Panc1 (cell line): ENCODE measurements at regions of chr11 and their contacts with region 1.

Region 1: GRCh38 chr11:10735481-10736475 is 15.3 kb upstream of the CTR9 start:
- DNase-seq: peak; percentile 97
- ATAC-seq: peak; percentile 99
- H3K4me3 ChIP-seq: peak overlapping the region; percentile 24 to 52
- H3K27ac ChIP-seq: peak overlapping the region; percentile 74
- H3K4me1 ChIP-seq: peaks cover 11% of the 10 kb centered on the region
- H3K27me3 ChIP-seq: no peaks in the 10 kb centered on the region
- CTCF ChIP-seq: peak; percentile 100

Region 2: DNA sequence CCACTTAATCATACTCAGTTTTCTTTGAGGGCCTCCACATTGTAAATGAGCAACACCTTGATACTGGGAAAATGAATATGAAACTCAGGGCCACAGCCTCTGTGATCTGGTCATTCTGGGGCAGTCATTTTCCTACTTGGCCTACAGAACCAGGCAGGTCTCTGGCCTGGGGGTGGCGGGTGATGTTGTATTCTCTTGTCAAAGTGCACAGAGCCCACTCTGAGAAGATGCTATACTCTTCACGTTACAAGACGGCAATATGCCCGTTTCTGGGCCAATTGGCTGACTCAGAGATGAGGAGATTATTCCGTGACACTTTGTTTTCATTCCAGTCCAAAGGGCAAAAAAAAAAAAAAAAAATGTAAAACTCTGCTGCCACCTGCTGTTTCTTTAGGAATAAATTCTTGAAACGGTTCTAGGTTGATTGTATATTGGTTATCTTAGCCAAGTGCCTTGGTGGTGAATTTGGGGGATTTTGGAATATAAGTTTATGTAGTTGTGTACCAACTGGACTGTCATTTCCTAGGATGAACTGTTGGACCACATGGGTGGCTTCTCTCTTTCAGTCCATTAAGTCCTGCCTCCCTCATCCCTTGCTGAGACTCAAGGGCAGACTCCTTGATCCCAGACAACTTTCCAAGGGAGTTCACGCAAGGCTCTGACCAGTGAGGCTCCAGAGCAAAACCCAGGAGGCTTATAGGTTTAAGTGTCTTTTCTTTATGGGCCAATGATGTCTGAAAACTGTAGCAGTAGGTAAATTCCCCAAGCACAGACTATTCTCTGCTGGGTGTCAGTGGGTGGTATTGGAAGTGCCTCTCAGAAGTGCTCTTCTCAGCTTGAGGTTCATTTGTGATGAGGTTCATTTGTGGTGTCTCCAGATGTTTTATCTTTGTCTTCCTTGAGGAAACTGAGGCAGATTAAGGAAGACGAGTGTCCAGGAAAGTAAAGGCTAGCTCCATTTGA is 412.7 kb before region 1 on chr11:
- CTCF ChIA-PET with region 1: no interaction called
- POLR2A ChIA-PET with region 1: no interaction called
- in situ Hi-C with region 1: no loop called
- intact Hi-C with region 1: loop called (anchors 5 kb)
- DNase-seq: peak; percentile 90
- ATAC-seq: peak; percentile 82
- H3K4me3 ChIP-seq: peak overlapping the region in 1 of 2 experiments; percentile 36; a peak in 2 of 4 replicates
- H3K27ac ChIP-seq: peak overlapping the region; percentile 90
- H3K4me1 ChIP-seq: peaks cover 83% of the 10 kb centered on the region
- H3K27me3 ChIP-seq: no peaks in the 10 kb centered on the region
- CTCF ChIP-seq: peak; percentile 83

Region 3: GRCh38 chr11:10381736-10382135 is 354.0 kb before region 1 on chr11:
- CTCF ChIA-PET with region 1: interaction called, 11 read pairs
- POLR2A ChIA-PET with region 1: no interaction called
- in situ Hi-C with region 1: no loop called
- intact Hi-C with region 1: no loop called
- DNase-seq: no peak
- ATAC-seq: no peak
- H3K4me3 ChIP-seq: no peak overlapping the region
- H3K27ac ChIP-seq: no peak overlapping the region
- H3K4me1 ChIP-seq: no peaks in the 10 kb centered on the region
- H3K27me3 ChIP-seq: no peaks in the 10 kb centered on the region; the same call in 1 of the 2 replicates
- CTCF ChIP-seq: no peak

Region 4: GRCh38 chr11:10405855-10406592 is 329.8 kb before region 1 on chr11:
- CTCF ChIA-PET with region 1: interaction called, 6 read pairs
- POLR2A ChIA-PET with region 1: no interaction called
- in situ Hi-C with region 1: no loop called
- intact Hi-C with region 1: loop called (anchors 1 kb)
- DNase-seq: peak; percentile 84
- ATAC-seq: peak; percentile 91
- H3K4me3 ChIP-seq: no peak overlapping the region
- H3K27ac ChIP-seq: peak overlapping the region; percentile 4; the same call in 1 of the 2 replicates
- H3K4me1 ChIP-seq: peaks cover 18% of the 10 kb centered on the region
- H3K27me3 ChIP-seq: no peaks in the 10 kb centered on the region
- CTCF ChIP-seq: peak; percentile 96

Region 5: GRCh38 chr11:10514210-10514609 is 221.6 kb before region 1 on chr11:
- CTCF ChIA-PET with region 1: no interaction called
- POLR2A ChIA-PET with region 1: no interaction called
- in situ Hi-C with region 1: no loop called
- intact Hi-C with region 1: loop called (anchors 2 kb)
- DNase-seq: no peak
- ATAC-seq: no peak
- H3K4me3 ChIP-seq: no peak overlapping the region
- H3K27ac ChIP-seq: no peak overlapping the region
- H3K4me1 ChIP-seq: no peaks in the 10 kb centered on the region
- H3K27me3 ChIP-seq: no peaks in the 10 kb centered on the region
- CTCF ChIP-seq: peak; percentile 50; the same call in 1 of the 2 replicates

Region 6: DNA sequence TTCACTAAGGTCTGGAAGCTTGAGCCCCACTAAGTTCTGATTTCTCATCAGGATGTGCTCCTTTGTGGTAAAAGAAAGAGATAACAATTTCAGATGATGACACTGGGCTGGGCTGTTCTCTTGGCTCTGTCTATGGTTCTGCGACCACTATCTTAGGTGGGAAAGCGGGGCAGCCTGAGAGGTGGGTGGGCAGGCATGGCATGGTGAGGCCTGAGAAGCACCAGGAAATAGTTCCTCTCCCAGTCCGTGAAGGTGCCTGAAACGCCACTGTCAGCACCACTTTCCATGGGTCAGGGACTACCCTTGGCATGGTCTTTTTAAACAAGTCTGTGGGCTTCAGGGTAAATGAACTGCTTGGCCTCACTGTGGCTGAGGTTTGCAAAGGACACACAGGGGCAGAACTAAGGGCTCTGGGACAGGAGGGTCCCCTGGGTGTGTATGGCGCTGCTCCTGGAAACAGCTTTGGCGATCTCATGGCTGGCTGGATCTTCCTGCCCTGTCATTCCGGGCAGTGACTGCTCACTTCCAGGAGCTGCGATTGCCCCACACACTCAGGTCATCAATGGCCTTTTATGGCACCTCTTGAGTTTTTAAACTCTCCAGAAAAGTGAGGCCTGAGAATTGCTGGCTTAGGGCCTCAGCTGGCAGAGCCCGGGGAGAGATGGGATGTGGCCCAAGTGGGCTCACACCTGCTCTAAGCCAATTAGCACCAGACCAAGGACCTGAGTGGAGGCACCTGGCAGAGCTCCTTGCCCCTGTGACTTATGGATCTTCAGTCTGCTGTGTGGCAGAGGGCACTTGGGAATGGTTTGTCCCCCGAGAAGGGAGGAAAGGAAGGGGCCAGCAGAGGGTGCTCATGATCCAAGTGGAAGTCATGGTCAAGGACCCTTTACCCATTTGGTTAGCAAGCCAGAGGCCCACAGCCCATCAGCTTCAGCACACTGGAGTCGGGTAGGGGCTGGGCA is 111.7 kb before region 1 on chr11:
- CTCF ChIA-PET with region 1: interaction called, 4 read pairs
- POLR2A ChIA-PET with region 1: no interaction called
- in situ Hi-C with region 1: no loop called
- intact Hi-C with region 1: loop called (anchors 2 kb)
- DNase-seq: peak; percentile 33
- ATAC-seq: peak; percentile 75
- H3K4me3 ChIP-seq: no peak overlapping the region
- H3K27ac ChIP-seq: no peak overlapping the region
- H3K4me1 ChIP-seq: no peaks in the 10 kb centered on the region
- H3K27me3 ChIP-seq: peaks cover 9% of the 10 kb centered on the region; the same call in 1 of the 2 replicates
- CTCF ChIP-seq: no peak

Region 7: GRCh38 chr11:10634407-10634806 is 101.4 kb before region 1 on chr11:
- CTCF ChIA-PET with region 1: no interaction called
- POLR2A ChIA-PET with region 1: no interaction called
- in situ Hi-C with region 1: no loop called
- intact Hi-C with region 1: no loop called
- DNase-seq: no peak
- ATAC-seq: no peak
- H3K4me3 ChIP-seq: no peak overlapping the region
- H3K27ac ChIP-seq: no peak overlapping the region
- H3K4me1 ChIP-seq: no peaks in the 10 kb centered on the region
- H3K27me3 ChIP-seq: no peaks in the 10 kb centered on the region
- CTCF ChIP-seq: no peak

Region 8: GRCh38 chr11:10762185-10762584 is 26.4 kb after region 1 on chr11:
- CTCF ChIA-PET with region 1: no interaction called
- POLR2A ChIA-PET with region 1: no interaction called
- in situ Hi-C with region 1: no loop called
- intact Hi-C with region 1: no loop called
- DNase-seq: no peak
- ATAC-seq: no peak
- H3K4me3 ChIP-seq: no peak overlapping the region
- H3K27ac ChIP-seq: no peak overlapping the region
- H3K4me1 ChIP-seq: no peaks in the 10 kb centered on the region
- H3K27me3 ChIP-seq: no peaks in the 10 kb centered on the region
- CTCF ChIP-seq: no peak